ENCODE measurements at regions of chr16 and their contacts with region 1.

Region 1: GRCh38 chr16:1863681-1864460 is 8.1 kb downstream of the MEIOB start:
- DNase-seq: no peak
- H3K4me3 ChIP-seq: no peak overlapping the region
- H3K27ac ChIP-seq: no peak overlapping the region
- H3K4me1 ChIP-seq: no peaks in the 10 kb centered on the region
- H3K27me3 ChIP-seq: no peaks in the 10 kb centered on the region
- CTCF ChIP-seq: peak; percentile 49

Region 2: DNA sequence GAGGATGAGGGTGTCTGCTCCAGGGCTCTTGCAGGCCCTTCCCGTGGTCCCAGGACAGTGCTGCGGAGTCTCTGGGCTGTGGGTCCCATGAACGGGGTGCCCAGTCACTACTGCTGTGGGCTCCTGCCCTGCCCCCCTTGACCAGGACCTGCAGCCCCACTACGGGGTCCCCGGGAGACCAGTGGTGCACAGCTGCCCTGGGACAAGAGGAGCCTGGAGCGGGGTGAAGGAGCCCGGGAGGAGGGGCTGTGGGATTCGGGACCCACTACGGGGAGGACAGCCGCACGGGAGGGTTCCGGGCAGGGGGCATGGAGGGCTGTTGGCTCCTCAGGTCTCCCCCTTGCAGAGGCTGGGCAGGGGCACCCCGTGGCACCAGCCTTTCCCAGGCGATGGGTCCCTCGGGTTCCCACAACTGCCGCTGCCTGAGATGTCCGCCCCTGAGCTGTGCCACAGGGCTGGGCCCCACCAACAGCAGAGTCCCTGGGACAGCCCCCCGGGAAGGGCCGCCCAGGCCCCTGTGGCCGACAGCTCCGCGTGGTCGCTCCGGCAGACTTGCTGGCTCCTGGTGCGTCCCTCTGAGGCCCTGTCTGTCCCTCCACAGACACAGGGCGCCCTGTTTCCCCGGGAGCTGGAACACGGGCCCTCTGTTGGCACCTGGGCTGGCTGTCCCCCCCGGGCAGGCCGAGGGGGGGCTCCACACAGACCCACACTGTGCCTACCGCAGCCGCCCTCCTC is 1011.3 kb before region 1 on chr16:
- intact Hi-C with region 1: no loop called
- DNase-seq: no peak
- H3K4me3 ChIP-seq: no peak overlapping the region
- H3K27ac ChIP-seq: no peak overlapping the region
- H3K4me1 ChIP-seq: no peaks in the 10 kb centered on the region
- H3K27me3 ChIP-seq: no peaks in the 10 kb centered on the region
- CTCF ChIP-seq: no peak

Region 3: DNA sequence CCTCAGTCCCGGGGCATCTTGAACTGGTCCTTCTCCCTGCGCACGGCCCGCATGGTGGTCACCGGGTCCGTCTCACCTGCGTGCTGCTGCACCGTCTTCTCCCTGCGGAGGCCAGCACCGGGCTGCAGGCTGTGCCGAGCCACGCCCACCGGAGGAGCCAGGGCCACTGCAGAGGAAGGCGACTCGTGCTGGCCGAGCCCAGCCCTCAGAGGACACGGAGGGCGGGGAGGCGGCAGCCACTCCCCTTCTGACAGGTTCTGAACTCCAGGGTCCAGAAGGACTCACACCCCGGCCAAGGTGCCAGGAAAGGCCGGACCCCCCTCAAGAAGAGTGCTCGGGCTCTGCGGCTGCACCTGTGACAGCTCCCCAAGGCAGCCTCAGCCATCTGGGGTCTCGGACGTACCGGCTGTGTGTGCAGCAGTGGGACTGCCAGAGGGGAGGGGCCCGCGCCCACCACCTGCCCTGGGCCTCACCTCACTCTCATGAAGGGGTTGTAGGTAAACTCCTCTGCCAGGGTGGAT is 54.5 kb before region 1 on chr16:
- intact Hi-C with region 1: loop called (anchors 10 kb)
- DNase-seq: peak; percentile 40
- H3K4me3 ChIP-seq: no peak overlapping the region
- H3K27ac ChIP-seq: no peak overlapping the region
- H3K4me1 ChIP-seq: no peaks in the 10 kb centered on the region
- H3K27me3 ChIP-seq: no peaks in the 10 kb centered on the region
- CTCF ChIP-seq: no peak

Region 4: GRCh38 chr16:1929578-1930337 is 65.9 kb after region 1 on chr16:
- intact Hi-C with region 1: loop called (anchors 2 kb)
- DNase-seq: peak; percentile 89
- H3K4me3 ChIP-seq: peak overlapping the region; percentile 49
- H3K27ac ChIP-seq: peak overlapping the region; percentile 19
- H3K4me1 ChIP-seq: no peaks in the 10 kb centered on the region
- H3K27me3 ChIP-seq: no peaks in the 10 kb centered on the region
- CTCF ChIP-seq: peak; percentile 100

Region 5: GRCh38 chr16:1971796-1972489 is 108.1 kb after region 1 on chr16 and contains the start of gene TBL3:
- intact Hi-C with region 1: no loop called
- DNase-seq: peak; percentile 93
- H3K4me3 ChIP-seq: peak within 1 kb of the TSS; percentile 99
- H3K27ac ChIP-seq: peak within 1 kb of the TSS; percentile 82
- H3K4me1 ChIP-seq: peaks cover 11% of the 10 kb centered on the region
- H3K27me3 ChIP-seq: no peaks in the 10 kb centered on the region
- CTCF ChIP-seq: no peak
- total RNA-seq, gene TBL3: 19.4 to 43.1 TPM

Region 6: GRCh38 chr16:2385190-2385836 is 521.4 kb after region 1 on chr16:
- intact Hi-C with region 1: no loop called
- DNase-seq: no peak
- H3K4me3 ChIP-seq: no peak overlapping the region
- H3K27ac ChIP-seq: no peak overlapping the region
- H3K4me1 ChIP-seq: no peaks in the 10 kb centered on the region
- H3K27me3 ChIP-seq: no peaks in the 10 kb centered on the region
- CTCF ChIP-seq: no peak

Region 7: GRCh38 chr16:2500918-2501750 is 637.3 kb after region 1 on chr16:
- intact Hi-C with region 1: no loop called
- DNase-seq: peak; percentile 82
- H3K4me3 ChIP-seq: peak overlapping the region; percentile 5
- H3K27ac ChIP-seq: no peak overlapping the region
- H3K4me1 ChIP-seq: peaks cover 6% of the 10 kb centered on the region
- H3K27me3 ChIP-seq: no peaks in the 10 kb centered on the region
- CTCF ChIP-seq: peak; percentile 98

Measured in colonic mucosa (tissue), 4 donors.